Activated CD8-positive, alpha-beta T cell treated with anti-CD3 and anti-CD28 coated beads, Interleukin-2, amount 10 ng/mL, durations not matched to agents 7 days and 5 days (primary cell): ENCODE measurements at regions of chr7 and their contacts with region 1.

Region 1: DNA sequence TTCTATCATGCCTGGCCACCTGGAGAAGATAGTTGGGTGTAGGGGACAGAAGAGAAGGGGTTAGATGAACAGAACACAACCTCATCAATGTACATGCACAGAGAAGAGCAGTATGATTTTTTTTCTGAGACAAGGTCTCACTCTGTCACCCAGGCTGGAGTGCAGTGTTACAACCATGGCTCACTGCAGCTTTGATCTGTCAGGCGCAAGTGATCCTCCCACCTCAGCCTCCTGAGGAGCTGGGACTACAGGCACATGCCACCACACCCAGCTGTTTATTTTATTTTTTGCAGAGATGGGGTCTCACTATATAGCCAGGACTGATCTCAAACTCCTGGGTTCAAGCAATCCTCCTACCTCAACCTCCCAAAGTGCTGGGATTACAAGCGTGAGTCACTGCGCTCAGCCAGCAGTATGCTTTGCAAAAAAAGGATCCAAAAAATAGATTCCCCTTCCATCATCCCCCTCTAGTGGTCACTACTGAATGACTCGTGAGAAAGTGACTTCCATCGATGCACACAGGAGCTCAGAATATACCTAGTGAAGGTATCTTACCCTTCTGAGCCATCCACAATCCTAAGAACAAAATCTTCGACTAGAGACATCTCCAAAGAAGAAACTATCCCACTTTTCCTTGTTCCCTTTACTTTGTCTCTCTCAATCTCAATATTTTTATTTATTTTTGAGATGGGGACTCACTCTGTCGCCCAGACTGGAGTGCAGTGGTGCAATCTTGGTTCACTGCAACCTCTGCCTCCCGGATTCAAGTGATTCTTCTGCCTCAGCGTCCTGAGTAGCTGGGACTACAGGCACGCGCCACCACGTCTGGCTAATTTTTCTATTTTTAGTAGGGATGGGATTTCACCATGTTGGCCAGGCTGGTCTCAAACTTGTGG is 21.0 kb downstream of the ZCWPW1 start:
- DNase-seq: peak; percentile 66
- ATAC-seq: peak; percentile 92
- H3K4me3 Mint-ChIP-seq: no peak overlapping the region
- H3K27ac Mint-ChIP-seq: no peak overlapping the region
- H3K4me1 Mint-ChIP-seq: peaks cover 5% of the 10 kb centered on the region
- H3K27me3 Mint-ChIP-seq: peaks cover 12% of the 10 kb centered on the region

Region 2: DNA sequence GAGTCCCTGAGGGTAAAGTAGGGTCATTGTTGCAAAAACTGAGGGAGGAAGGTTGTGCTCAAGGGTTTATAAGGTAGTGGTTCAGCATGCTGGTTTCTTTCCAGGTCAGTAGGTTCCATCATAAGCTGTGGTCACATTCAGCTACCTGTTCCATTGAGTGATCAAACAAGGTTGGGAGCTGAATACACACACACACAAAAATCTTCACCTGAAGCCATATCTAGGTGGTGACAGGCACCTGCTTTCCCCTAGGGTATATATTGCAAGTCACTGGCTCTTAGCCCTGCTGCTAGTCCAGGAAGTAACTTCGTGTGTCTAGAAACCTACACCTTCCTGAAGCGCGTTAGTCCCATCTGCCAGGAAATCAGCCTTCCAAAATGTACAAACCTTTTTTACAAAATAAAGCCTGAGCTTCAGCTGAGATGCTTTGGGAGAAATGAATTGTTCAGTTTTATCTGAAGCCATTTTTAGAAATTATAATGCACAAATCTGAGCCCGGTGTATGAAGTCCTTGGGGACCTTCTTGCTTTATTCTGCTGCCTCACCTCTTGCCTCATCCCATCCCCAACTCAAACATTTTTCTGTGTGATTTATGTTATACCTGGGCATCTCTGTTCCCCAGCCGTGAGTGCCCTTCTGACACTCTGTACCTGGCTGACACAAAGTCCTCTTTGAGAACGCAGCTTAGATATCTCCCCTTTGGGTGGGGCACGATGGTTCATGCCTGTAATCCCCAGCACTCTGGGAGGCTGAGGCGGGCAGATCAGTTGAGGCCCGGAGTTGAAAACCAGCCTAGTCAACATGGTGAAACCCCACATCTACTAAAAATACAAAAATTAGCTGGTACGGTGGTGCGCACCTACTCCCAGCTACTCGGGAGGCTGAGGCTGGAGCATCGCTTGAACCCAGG is 269.4 kb before region 1 on chr7:
- CTCF ChIA-PET with region 1: interaction called, 25 read pairs
- POLR2A ChIA-PET with region 1: no interaction called
- DNase-seq: no peak
- ATAC-seq: peak; percentile 55
- H3K4me3 Mint-ChIP-seq: no peak overlapping the region
- H3K27ac Mint-ChIP-seq: peak overlapping the region; percentile 62
- H3K4me1 Mint-ChIP-seq: peaks cover 16% of the 10 kb centered on the region
- H3K27me3 Mint-ChIP-seq: no peaks in the 10 kb centered on the region

Region 3: GRCh38 chr7:100373261-100373831 is 34.2 kb before region 1 on chr7 and contains the start of gene PILRA:
- CTCF ChIA-PET with region 1: interaction called, 17 read pairs
- POLR2A ChIA-PET with region 1: no interaction called
- DNase-seq: no peak
- ATAC-seq: no peak
- H3K4me3 Mint-ChIP-seq: peak within 1 kb of the TSS; percentile 3
- H3K27ac Mint-ChIP-seq: peak within 1 kb of the TSS; percentile 92
- H3K4me1 Mint-ChIP-seq: peaks cover 52% of the 10 kb centered on the region
- H3K27me3 Mint-ChIP-seq: no peaks in the 10 kb centered on the region
- total RNA-seq, gene PILRA: 8.1 to 11.5 TPM

Region 4: GRCh38 chr7:100384628-100385294 is 22.8 kb before region 1 on chr7:
- CTCF ChIA-PET with region 1: interaction called, 20 read pairs
- POLR2A ChIA-PET with region 1: no interaction called
- DNase-seq: no peak
- ATAC-seq: no peak
- H3K4me3 Mint-ChIP-seq: no peak overlapping the region
- H3K27ac Mint-ChIP-seq: no peak overlapping the region
- H3K4me1 Mint-ChIP-seq: peaks cover 11% of the 10 kb centered on the region
- H3K27me3 Mint-ChIP-seq: peaks cover 16% of the 10 kb centered on the region

Region 5: GRCh38 chr7:100396421-100396982 is 11.0 kb before region 1 on chr7:
- CTCF ChIA-PET with region 1: interaction called, 14 read pairs
- POLR2A ChIA-PET with region 1: no interaction called
- DNase-seq: peak; percentile 77
- ATAC-seq: peak; percentile 92
- H3K4me3 Mint-ChIP-seq: peak overlapping the region; percentile 58
- H3K27ac Mint-ChIP-seq: peak overlapping the region; percentile 79
- H3K4me1 Mint-ChIP-seq: peaks cover 23% of the 10 kb centered on the region
- H3K27me3 Mint-ChIP-seq: peaks cover 18% of the 10 kb centered on the region

Region 6: GRCh38 chr7:100418930-100419659 is 11.6 kb after region 1 on chr7:
- CTCF ChIA-PET with region 1: interaction called, 34 read pairs
- POLR2A ChIA-PET with region 1: interaction called, 3 read pairs
- DNase-seq: no peak
- ATAC-seq: no peak
- H3K4me3 Mint-ChIP-seq: no peak overlapping the region
- H3K27ac Mint-ChIP-seq: no peak overlapping the region
- H3K4me1 Mint-ChIP-seq: peaks cover 1% of the 10 kb centered on the region
- H3K27me3 Mint-ChIP-seq: peaks cover 3% of the 10 kb centered on the region

Region 7: GRCh38 chr7:100428199-100428966 is 20.9 kb after region 1 on chr7 and contains the start of gene ZCWPW1:
- CTCF ChIA-PET with region 1: interaction called, 17 read pairs
- POLR2A ChIA-PET with region 1: interaction called, 5 read pairs
- DNase-seq: peak; percentile 97
- ATAC-seq: peak; percentile 68
- H3K4me3 Mint-ChIP-seq: peak within 1 kb of the TSS; percentile 98
- H3K27ac Mint-ChIP-seq: peak within 1 kb of the TSS; percentile 100
- H3K4me1 Mint-ChIP-seq: peaks cover 36% of the 10 kb centered on the region
- H3K27me3 Mint-ChIP-seq: peaks cover 6% of the 10 kb centered on the region
- total RNA-seq, gene ZCWPW1: 2.6 to 2.8 TPM